AG04450 (cell line): ENCODE measurements at regions of chr2 and their contacts with region 1.

Region 1: GRCh38 chr2:219160186-219161017 is at the start of gene NHEJ1:
- DNase-seq: peak; percentile 82
- H3K4me3 ChIP-seq: peak within 1 kb of the TSS; percentile 89
- H3K27ac ChIP-seq: peak within 1 kb of the TSS; percentile 90
- H3K27me3 ChIP-seq: no peaks in the 10 kb centered on the region
- CTCF ChIP-seq: peak; percentile 98
- polyA plus RNA-seq, gene NHEJ1: 21.9 and 22.9 TPM in 2 replicates

Region 2: GRCh38 chr2:219029829-219030165 is 130.6 kb before region 1 on chr2:
- CTCF ChIA-PET with region 1: interaction called, 250 read pairs
- POLR2A ChIA-PET with region 1: no interaction called
- DNase-seq: peak; percentile 33
- H3K4me3 ChIP-seq: no peak overlapping the region
- H3K27ac ChIP-seq: no peak overlapping the region
- H3K27me3 ChIP-seq: peaks cover 41% of the 10 kb centered on the region
- CTCF ChIP-seq: peak; percentile 95

Region 3: DNA sequence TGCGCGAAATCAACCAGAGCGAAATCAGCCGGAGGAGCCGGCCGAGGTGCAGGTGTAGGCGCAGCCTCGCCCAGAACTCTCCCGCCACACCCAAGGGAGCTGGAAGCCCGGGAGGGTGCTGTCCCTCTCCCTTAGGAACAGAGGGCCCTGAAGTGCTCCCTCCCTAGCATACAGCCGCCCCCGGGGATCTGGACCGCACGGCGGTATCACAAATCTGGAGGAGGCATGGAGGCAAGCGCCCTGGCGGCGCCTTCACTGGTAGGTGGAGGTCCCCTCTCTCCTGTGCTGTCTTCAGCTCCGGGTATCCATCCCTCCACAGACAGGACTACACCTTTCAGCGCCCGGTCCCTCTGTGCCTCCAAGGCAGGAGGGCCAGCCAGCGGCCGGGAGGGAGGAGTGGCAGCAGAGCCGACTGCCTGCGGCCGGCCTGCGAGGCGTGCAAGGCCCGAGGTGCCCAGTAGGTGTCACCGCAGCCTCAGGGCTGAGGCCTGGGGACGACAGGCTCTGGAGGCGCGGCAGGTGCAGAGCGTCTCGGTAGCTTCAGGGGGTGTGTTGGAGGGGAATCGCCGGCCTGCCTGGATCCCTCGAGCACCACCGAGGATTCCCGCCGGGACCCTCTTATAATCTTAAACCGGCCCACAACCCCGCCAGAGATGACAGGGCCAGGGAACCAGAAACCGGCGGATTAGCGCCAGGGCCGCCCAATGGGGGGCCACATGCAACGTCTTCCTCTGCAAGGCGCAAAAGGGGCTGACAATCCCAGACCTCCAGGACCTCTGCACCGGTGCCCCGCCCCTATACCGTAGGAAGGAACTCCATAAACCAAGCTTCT is 102.5 kb before region 1 on chr2:
- CTCF ChIA-PET with region 1: interaction called, 180 read pairs
- POLR2A ChIA-PET with region 1: no interaction called
- DNase-seq: no peak
- H3K4me3 ChIP-seq: peak overlapping the region; percentile 13; the same call in 1 of the 2 replicates
- H3K27ac ChIP-seq: no peak overlapping the region
- H3K27me3 ChIP-seq: peaks cover 78% of the 10 kb centered on the region
- CTCF ChIP-seq: peak; percentile 89

Region 4: DNA sequence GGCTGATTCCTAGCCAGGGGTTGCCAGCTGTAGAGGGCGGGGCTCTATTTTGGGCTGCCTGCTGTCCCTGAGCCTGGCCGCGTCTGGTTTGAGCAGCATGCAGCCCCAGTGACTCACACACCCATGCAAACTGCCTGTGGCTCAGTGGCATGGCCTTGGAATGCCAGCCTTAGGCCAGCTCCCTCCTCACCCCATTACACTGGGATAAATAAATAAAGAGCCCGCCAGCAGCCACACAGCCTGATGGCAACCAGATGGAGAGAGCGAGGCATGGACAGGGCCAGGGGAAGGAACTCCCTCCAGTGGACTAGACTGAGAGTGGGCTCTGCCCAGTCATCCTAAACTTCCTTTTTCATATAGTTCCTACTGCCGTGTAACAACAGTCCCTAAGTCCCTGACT is 18.1 kb before region 1 on chr2:
- CTCF ChIA-PET with region 1: interaction called, 22 read pairs
- POLR2A ChIA-PET with region 1: no interaction called
- DNase-seq: peak; percentile 32
- H3K4me3 ChIP-seq: no peak overlapping the region
- H3K27ac ChIP-seq: peak overlapping the region; percentile 11
- H3K27me3 ChIP-seq: no peaks in the 10 kb centered on the region
- CTCF ChIP-seq: peak; percentile 35; the same call in 1 of the 2 replicates

Region 5: DNA sequence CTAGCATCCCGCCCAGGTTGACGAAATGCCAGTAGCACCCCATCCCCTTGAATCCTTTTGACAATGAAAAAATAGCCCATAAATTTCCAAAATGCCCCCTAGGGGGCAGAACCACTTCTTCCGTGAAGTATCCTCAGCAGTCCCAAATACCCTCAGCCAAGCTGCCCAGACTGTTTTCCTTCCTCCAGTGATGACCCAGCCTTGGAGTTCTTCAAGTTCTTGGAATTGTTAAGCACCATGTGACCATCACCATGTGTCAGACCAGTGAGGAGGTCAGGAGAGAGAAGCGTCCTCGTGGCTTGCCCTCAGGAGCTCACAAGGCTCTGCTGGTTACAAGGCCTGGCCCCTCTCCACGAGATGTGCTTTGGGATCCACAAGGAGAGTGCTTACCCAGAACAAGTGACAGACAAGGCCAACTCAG is 10.8 kb after region 1 on chr2:
- CTCF ChIA-PET with region 1: interaction called, 40 read pairs
- POLR2A ChIA-PET with region 1: interaction called, 3 read pairs
- DNase-seq: peak; percentile 64
- H3K4me3 ChIP-seq: no peak overlapping the region
- H3K27ac ChIP-seq: peak overlapping the region; percentile 70
- H3K27me3 ChIP-seq: no peaks in the 10 kb centered on the region
- CTCF ChIP-seq: peak; percentile 79

Region 6: DNA sequence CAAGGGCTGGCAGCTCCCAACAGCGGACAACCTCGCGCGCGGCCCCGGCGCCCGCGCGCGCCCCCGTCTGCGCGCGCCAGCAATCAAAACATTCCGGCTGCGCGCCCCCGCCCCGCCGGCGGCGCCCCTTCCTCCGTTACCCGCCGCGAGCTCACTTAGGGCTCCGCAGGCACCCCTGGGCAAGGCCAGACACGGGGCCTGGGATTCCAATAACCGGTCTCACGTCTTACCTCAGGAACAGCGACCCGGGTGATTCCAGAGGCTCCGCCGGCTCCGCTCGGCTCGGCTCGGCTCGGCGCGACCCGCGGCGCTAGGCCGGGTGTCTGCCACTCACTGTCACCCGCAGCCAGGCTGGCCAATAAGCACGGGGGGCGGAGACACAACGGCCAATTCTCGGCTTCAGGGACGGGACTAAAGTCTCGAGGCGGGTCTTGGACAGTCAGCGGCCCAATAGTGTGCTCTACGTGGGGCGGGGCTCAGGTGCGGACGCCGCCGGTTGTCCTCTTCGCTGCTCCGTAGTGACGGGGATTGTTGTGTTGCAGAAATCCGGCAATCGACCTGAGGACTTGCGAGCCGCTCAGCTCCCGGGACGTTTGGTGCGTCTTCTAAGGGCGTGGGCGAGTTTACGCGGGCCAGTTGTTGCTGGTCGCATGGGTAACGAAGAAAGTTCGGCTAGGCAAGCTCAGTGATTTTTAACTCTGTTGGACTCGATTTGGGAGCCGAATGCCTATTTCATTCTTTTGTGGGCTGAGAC is 69.1 kb after region 1 on chr2 and contains the starts of genes ANKZF1 and ATG9A:
- CTCF ChIA-PET with region 1: interaction called, 11 read pairs
- POLR2A ChIA-PET with region 1: no interaction called
- DNase-seq: peak; percentile 93
- H3K4me3 ChIP-seq: peak within 1 kb of the TSS; percentile 71
- H3K27ac ChIP-seq: peak within 1 kb of the TSS; percentile 82
- H3K27me3 ChIP-seq: no peaks in the 10 kb centered on the region
- CTCF ChIP-seq: no peak
- polyA plus RNA-seq, gene ANKZF1: 20.3 and 22.0 TPM in 2 replicates
- polyA plus RNA-seq, gene ATG9A: 81.0 and 84.3 TPM in 2 replicates